IMR-90 (cell line): ENCODE measurements at regions of chr2 and their contacts with region 1.

Region 1: GRCh38 chr2:36663851-36664695 is 32.4 kb upstream of the VIT start:
- DNase-seq: peak; percentile 71
- ATAC-seq: peak; percentile 85
- H3K4me3 ChIP-seq: no peak overlapping the region
- H3K27ac ChIP-seq: no peak overlapping the region
- H3K4me1 ChIP-seq: peaks cover 9% of the 10 kb centered on the region
- H3K27me3 ChIP-seq: no peaks in the 10 kb centered on the region
- CTCF ChIP-seq: peak; percentile 70
- POLR2A ChIP-seq: no peak
- RAD21 ChIP-seq: peak; percentile 75

Region 2: DNA sequence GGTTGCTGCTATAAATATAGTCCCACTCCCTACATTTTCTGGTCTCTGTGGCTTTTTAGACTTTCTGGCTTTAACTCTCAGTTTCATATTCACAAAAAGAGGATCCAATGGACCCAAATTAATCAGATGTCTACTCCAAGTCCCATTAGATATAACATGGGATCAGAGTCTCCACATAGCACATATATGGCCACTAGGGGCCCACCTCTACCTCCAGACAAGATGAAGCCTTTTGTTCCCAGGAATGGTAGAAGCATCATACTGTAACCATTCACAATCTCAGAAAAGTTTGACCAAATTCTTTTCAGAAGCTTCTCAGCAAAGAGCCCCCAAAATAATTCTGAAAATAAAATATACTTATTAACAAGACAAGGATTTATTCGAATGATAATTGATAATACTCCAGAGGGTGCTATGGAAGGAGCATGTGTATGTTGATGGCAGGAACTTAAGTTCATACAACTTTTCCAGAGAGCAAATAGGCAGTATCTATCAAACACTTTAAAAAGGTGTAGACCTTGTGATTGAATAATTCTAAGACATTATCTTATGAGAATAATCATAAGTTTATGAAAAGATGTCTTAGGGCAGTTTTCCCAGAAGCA is 690.8 kb before region 1 on chr2:
- CTCF ChIA-PET with region 1: no interaction called
- POLR2A ChIA-PET with region 1: no interaction called
- dilution Hi-C with region 1: no loop called
- in situ Hi-C with region 1: no loop called
- intact Hi-C with region 1: loop called (anchors 2 kb)
- DNase-seq: peak; percentile 42
- ATAC-seq: peak; percentile 79; the same call in 1 of the 2 replicates
- H3K4me3 ChIP-seq: no peak overlapping the region
- H3K27ac ChIP-seq: no peak overlapping the region
- H3K4me1 ChIP-seq: no peaks in the 10 kb centered on the region
- H3K27me3 ChIP-seq: no peaks in the 10 kb centered on the region
- CTCF ChIP-seq: peak; percentile 60
- POLR2A ChIP-seq: no peak
- RAD21 ChIP-seq: peak; percentile 71

Region 3: DNA sequence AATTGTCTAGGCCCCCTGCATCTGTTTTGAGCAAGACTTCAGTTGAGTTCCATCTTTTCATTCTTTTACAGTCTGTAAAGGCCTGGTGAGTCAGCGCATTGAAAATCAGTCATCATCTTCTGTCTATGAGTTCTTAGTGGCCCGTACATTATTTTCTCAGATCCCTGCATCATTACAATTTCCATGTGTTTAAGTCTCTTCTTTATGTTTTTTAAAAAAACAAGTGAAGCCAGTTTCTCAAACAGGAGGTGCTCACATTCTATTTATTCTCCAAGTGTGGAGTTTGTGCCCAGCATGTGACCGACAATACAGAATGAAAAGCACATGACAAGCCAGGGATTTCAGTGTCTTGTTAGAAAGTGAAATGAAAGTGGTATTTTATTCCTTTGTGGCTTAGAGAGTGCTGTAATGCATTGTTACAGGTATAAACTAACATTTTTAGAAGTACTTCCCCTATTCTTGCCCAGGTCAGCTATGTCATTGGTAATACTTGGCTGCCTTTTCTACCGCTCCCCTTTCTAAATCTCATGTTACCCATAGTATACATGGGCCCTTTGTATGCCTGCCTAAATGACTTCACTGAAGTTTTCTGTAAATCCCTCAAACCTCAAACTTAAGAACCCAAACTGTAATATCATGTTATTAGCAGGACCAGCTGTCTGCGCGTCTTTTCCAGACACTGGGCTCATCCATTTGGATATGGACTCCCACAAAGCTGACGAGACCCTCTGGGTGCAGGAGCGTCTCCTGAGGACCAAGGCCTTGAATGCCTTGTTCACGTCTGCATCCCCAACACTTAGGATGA is 133.7 kb before region 1 on chr2:
- CTCF ChIA-PET with region 1: no interaction called
- POLR2A ChIA-PET with region 1: no interaction called
- dilution Hi-C with region 1: no loop called
- in situ Hi-C with region 1: no loop called
- intact Hi-C with region 1: loop called (anchors 5 kb)
- DNase-seq: peak; percentile 88
- ATAC-seq: peak; percentile 63
- H3K4me3 ChIP-seq: no peak overlapping the region
- H3K27ac ChIP-seq: peak overlapping the region; percentile 50; the same call in 1 of the 2 replicates
- H3K4me1 ChIP-seq: peaks cover 17% of the 10 kb centered on the region
- H3K27me3 ChIP-seq: no peaks in the 10 kb centered on the region
- CTCF ChIP-seq: no peak
- POLR2A ChIP-seq: no peak
- RAD21 ChIP-seq: no peak

Region 4: DNA sequence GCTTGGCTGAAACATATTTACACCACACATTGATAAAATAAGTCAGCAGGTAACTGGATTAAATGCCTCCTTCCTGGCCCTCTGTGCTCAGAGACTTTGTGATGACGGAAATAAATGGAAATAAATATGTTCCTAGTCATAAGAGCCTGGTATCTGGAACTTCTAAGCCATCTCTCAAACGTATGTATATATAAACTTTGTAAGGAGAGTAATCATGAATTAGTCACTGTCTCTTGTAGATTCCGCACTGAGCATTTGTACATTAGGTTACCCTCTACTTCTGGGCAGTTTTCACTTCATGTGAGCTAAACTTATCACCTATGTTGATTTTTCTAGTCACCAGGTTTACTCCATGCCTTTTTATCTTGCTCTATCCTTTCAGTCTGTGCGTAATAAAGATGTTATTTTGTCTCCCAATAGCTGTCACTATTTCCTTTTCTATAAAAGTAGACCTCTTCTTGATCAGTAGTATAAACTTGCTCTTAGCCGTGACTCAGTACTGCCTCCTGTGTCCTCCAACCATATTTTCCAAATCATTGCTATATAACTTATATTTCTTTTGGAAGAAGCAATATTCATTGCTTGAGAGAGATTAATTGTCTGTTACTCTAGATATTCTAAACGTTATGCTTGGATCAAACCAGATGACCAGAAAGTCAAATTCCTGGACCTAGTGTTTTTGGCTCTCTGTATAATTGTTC is 119.3 kb before region 1 on chr2:
- CTCF ChIA-PET with region 1: interaction called, 4 read pairs
- POLR2A ChIA-PET with region 1: no interaction called
- dilution Hi-C with region 1: no loop called
- in situ Hi-C with region 1: no loop called
- intact Hi-C with region 1: loop called (anchors 5 kb)
- DNase-seq: peak; percentile 52
- ATAC-seq: peak; percentile 33; the same call in 1 of the 2 replicates
- H3K4me3 ChIP-seq: no peak overlapping the region
- H3K27ac ChIP-seq: no peak overlapping the region
- H3K4me1 ChIP-seq: peaks cover 9% of the 10 kb centered on the region
- H3K27me3 ChIP-seq: no peaks in the 10 kb centered on the region
- CTCF ChIP-seq: peak; percentile 44
- POLR2A ChIP-seq: no peak
- RAD21 ChIP-seq: no peak

Region 5: GRCh38 chr2:36556842-36557241 is 107.2 kb before region 1 on chr2:
- CTCF ChIA-PET with region 1: interaction called, 3 read pairs
- POLR2A ChIA-PET with region 1: no interaction called
- dilution Hi-C with region 1: no loop called
- in situ Hi-C with region 1: loop called (anchors 10 kb)
- intact Hi-C with region 1: no loop called
- DNase-seq: peak; percentile 82
- ATAC-seq: peak; percentile 72
- H3K4me3 ChIP-seq: no peak overlapping the region
- H3K27ac ChIP-seq: no peak overlapping the region
- H3K4me1 ChIP-seq: peaks cover 14% of the 10 kb centered on the region
- H3K27me3 ChIP-seq: no peaks in the 10 kb centered on the region
- CTCF ChIP-seq: no peak
- POLR2A ChIP-seq: no peak
- RAD21 ChIP-seq: no peak